CD8-positive, alpha-beta memory T cell (primary cell): ENCODE measurements at regions of chr14 and their contacts with region 1.

Region 1: DNA sequence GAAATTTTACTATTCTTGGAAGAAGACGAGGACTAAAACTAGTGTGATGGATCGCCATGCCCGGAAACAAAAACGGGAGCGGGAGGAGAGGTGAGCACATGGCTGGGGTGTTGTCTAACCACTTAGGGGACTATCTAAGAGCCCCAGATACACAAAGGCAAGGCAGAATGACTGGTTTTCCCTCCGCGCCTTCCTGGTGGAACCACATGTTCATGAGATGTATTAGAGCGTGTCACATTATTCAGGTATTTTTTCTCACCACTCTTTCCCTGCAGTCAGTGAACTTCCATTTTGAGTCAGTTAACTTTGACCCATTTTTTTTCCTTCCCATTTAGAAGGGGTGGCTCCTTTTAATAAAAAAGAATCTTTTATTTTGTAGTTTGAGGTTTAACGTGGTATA is 68.8 kb upstream of the TRAF3 start:
- DNase-seq: no peak
- H3K4me3 ChIP-seq: no peak overlapping the region
- H3K4me3 Mint-ChIP-seq: no peak overlapping the region
- H3K27ac ChIP-seq: no peak overlapping the region
- H3K27ac Mint-ChIP-seq: peak overlapping the region in 2 of 8 donors; percentile 72 to 87
- H3K4me1 ChIP-seq: no peaks in the 10 kb centered on the region
- H3K4me1 Mint-ChIP-seq: no peaks in the 10 kb centered on the region
- H3K27me3 ChIP-seq: no peaks in the 10 kb centered on the region
- H3K27me3 Mint-ChIP-seq: no peaks in the 10 kb centered on the region

Region 2: GRCh38 chr14:102608064-102608446 is 100.4 kb before region 1 on chr14:
- CTCF ChIA-PET with region 1: no interaction called
- POLR2A ChIA-PET with region 1: no interaction called
- DNase-seq: no peak
- H3K4me3 ChIP-seq: no peak overlapping the region
- H3K4me3 Mint-ChIP-seq: no peak overlapping the region
- H3K27ac ChIP-seq: no peak overlapping the region
- H3K27ac Mint-ChIP-seq: no peak overlapping the region
- H3K4me1 ChIP-seq: peaks cover 6% of the 10 kb centered on the region
- H3K4me1 Mint-ChIP-seq: peaks cover 22 to 51% (median 28%) of the 10 kb centered on the region in 3 donors
- H3K27me3 ChIP-seq: no peaks in the 10 kb centered on the region
- H3K27me3 Mint-ChIP-seq: no peaks in the 10 kb centered on the region

Region 3: GRCh38 chr14:102694530-102695166 is 13.8 kb before region 1 on chr14:
- CTCF ChIA-PET with region 1: interaction called, 13 read pairs
- POLR2A ChIA-PET with region 1: no interaction called
- DNase-seq: peak; percentile 19 to 59 (median 42)
- H3K4me3 ChIP-seq: no peak overlapping the region
- H3K4me3 Mint-ChIP-seq: no peak overlapping the region
- H3K27ac ChIP-seq: no peak overlapping the region
- H3K27ac Mint-ChIP-seq: peak overlapping the region in 1 of 8 donors; percentile 7
- H3K4me1 ChIP-seq: peaks cover 12% of the 10 kb centered on the region
- H3K4me1 Mint-ChIP-seq: peaks cover 14 to 39% (median 29%) of the 10 kb centered on the region in 3 donors
- H3K27me3 ChIP-seq: no peaks in the 10 kb centered on the region
- H3K27me3 Mint-ChIP-seq: no peaks in the 10 kb centered on the region